ENCODE measurements at regions of chr17 and their contacts with region 1.

Region 1: DNA sequence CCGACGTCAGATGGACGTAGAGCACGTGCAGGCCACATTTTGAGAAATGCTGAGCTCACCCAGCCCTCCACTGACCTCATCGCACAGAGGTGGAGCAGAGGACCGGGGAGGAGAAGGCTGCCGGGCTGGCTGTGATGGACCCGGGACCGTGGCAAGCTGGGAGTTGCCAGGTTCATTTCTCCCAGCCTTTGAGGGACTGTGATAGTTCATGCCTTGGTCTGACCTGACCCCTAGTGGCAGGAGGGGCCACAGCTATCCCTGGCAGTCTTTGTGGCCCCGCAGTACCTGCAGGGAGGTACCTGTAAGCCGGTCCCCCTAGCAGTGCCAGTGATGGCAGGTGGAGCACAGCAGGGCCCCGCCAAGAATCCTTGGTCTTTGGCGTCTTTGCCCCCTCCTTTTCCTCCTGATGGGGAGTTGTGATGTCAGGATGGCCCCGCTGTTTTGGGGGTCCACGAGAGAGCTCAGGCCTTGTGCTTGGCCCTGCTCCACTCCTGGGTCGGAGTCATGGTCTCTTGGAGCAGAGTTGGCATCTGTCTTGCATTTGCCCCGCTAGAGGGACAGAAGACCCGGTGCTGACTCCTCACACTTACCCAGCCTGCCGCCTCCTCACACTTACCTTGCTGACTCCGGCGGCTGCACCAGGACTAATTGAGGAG is 50.4 kb downstream of the OR1D5 start:
- DNase-seq: peak; percentile 75 to 77
- H3K4me3 ChIP-seq: no peak overlapping the region
- H3K27ac ChIP-seq: no peak overlapping the region
- H3K4me1 ChIP-seq: no peaks in the 10 kb centered on the region
- H3K27me3 ChIP-seq: no peaks in the 10 kb centered on the region
- CTCF ChIP-seq: peak; percentile 55 to 90 (median 80)
- POLR2A ChIP-seq: no peak

Region 2: DNA sequence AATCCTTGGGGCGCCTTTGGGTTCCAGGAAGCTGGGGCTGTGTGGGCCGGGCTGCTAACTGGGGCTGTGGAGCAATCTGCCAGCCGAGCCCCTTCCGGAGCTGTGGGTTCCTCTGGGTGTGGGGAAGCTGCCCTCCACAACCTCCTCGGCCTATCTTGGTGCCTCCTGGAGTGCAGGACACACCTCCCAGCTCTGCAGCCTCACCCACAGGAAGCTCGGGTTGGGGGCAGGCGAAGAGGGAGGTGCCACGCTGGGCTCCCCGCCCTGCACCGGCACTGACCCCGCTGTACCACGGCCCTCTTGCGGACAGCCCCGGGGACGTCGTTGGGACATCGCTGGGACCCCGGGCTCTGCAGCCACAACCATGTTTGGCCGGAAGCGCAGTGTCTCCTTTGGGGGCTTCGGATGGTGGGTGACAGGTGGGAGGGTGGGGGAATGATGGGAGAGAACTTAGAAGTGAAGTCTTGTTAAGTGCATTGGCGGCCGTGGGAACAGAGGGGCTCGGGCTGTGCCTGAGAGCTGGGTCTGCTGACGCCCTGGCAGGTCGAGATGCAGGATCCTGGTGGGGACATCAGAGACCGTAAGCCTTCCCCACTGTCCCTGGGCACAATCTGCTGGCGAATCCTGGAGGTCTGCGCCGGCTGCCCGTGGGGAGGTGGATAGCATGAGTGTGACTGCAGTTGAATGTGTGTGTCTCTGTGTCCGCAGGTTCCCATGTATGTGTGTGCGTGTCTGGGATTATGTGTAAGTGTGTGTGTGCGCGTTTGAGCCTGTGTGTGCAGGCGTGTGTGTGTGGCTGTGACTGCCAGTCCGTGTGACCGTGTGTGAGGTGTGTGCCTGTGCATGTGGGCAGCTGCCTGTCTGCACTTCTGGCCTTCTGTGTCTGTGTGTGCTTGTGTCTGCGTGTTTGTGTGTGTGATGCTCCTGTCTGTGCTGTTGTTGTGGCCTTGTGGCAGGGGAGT is 216.6 kb before region 1 on chr17 and contains the start of gene RAP1GAP2:
- intact Hi-C with region 1: no loop called
- DNase-seq: peak in 1 of 2 donors; percentile 17
- H3K4me3 ChIP-seq: no peak within 1 kb of the TSS
- H3K27ac ChIP-seq: no peak within 1 kb of the TSS
- H3K4me1 ChIP-seq: no peaks in the 10 kb centered on the region
- H3K27me3 ChIP-seq: no peaks in the 10 kb centered on the region
- CTCF ChIP-seq: no peak
- POLR2A ChIP-seq: no peak
- total RNA-seq, gene RAP1GAP2: 5.9 to 8.4 (median 6.8) TPM

Region 3: DNA sequence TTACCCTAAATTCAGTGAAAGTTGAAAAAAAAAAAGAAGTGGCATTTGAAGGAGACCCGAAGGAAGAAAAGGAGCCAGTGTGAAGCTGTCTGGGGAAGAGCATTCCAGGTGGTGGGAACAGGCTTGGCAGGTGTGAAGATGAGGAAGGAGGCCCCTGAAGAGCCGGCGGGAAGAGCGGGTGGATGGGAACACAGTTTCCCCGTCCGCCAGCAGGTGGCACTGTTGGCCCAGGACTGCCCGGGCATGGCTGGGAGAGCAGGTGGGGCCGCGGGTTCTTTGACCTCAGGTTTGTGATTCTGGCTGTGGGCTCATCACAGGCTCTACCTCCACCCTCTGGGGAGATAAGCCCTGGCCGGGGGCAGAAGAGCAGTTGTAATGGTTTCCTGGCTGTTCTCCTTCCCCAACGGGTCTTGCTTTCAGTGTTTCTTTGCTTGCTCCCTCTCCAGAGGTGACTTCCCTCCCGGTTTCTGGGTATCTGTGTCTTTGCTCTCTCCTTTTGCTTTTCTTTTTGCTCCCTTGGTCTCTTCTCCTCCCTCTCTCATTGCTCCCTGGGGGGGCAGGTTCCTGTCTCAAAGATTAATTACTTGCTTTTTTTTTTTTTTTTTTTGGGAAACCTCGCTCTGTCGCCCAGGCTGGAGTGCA is 184.5 kb before region 1 on chr17:
- intact Hi-C with region 1: loop called (anchors 2 kb)
- DNase-seq: peak; percentile 61 to 69
- H3K4me3 ChIP-seq: no peak overlapping the region
- H3K27ac ChIP-seq: no peak overlapping the region
- H3K4me1 ChIP-seq: peaks cover 0 to 3% of the 10 kb centered on the region in 2 donors
- H3K27me3 ChIP-seq: no peaks in the 10 kb centered on the region
- CTCF ChIP-seq: peak; percentile 81 to 93 (median 86)
- POLR2A ChIP-seq: no peak

Region 4: DNA sequence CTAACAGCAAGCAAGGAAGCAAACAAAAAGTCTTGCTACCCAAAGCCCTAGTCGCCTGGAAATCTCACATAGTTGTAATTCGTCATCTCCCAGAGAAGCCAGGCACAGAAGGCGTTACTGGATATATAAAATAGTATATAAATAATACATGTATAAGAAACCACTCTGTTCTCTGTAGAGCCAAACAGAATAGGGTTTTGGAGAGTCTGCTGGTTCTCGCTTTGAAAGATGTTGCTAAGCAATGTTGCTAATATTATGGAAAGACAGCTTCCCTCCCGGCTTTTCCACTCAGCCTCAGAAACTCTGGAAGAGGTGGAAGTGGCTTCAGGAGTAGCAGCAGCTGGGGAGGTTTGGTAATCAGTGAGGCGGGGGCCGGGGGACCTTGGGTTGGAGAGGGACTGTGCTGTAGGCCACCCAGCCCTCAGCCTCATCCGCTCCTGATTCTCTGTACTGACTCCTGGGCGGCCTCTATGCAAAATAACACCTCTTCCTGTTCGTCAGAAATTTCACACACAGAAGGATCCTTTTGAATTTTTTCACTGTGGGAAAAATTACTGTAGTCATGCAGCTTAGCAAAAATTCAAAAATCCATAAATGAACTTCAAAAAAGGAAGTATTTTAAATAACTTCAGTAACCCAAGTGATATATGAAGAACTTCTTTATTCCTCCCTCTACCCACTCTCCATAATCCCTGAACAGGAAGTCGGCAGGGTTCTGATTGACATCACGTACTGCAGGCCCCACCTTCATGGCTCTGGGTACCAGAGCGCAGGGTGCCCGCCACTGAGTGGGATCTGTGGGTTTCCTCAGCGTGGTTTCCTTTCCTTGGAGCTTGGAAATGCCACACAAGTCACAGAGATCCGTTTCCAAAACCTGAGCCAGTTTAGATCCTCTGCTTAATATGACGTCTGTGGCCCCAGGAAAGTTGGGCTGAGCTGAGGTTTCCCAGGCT is 165.4 kb before region 1 on chr17:
- intact Hi-C with region 1: loop called (anchors 5 kb)
- DNase-seq: no peak
- H3K4me3 ChIP-seq: no peak overlapping the region
- H3K27ac ChIP-seq: no peak overlapping the region
- H3K4me1 ChIP-seq: peaks cover 0 to 5% of the 10 kb centered on the region in 2 donors
- H3K27me3 ChIP-seq: no peaks in the 10 kb centered on the region
- CTCF ChIP-seq: no peak
- POLR2A ChIP-seq: no peak